Aorta (tissue), 5 donors: ENCODE measurements at regions of chr4 and their contacts with region 1.

Region 1: DNA sequence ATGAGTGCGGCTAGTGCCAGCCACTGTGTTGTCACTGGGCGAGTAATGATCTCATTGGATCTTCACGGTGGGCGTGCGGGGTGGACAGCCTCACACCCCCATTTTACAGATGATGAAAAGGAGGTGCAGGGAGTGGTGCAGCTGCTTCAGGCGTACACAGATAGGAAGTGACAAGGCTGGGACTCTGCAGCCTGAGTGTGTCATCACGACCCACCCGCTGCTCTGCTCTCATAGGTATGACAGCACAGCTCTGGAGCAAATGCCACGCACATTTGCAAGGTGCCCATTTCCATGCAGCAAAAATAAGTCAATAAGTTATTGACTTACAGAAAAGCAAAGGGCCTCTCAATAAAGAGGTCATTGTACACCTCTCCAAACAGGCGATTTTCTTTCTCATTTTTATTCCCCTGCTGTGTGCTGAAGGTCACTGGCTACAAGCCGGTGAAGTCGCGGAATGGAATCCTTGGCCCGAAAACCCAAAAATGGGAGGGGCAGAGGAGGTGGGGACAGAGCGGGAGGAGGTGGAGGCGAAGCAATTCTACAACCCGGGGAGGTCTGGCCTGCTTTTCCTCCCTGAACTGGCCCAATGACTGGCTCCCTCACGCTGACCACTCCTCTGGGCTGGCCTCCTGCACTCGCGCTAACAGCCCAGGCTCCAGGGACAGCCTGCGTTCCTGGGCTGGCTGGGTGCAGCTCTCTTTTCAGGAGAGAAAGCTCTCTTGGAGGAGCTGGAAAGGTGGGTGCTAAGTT is at the start of gene SOD3:
- DNase-seq: peak; percentile 94
- ATAC-seq: peak; percentile 95
- H3K4me3 ChIP-seq: peak within 1 kb of the TSS; percentile 13 to 70
- H3K27ac ChIP-seq: peak within 1 kb of the TSS; percentile 98
- H3K4me1 ChIP-seq: peaks cover 0 to 3% of the 10 kb centered on the region in 2 donors
- H3K27me3 ChIP-seq: no peaks in the 10 kb centered on the region
- total RNA-seq, gene SOD3: 356 to 380 TPM

Region 2: DNA sequence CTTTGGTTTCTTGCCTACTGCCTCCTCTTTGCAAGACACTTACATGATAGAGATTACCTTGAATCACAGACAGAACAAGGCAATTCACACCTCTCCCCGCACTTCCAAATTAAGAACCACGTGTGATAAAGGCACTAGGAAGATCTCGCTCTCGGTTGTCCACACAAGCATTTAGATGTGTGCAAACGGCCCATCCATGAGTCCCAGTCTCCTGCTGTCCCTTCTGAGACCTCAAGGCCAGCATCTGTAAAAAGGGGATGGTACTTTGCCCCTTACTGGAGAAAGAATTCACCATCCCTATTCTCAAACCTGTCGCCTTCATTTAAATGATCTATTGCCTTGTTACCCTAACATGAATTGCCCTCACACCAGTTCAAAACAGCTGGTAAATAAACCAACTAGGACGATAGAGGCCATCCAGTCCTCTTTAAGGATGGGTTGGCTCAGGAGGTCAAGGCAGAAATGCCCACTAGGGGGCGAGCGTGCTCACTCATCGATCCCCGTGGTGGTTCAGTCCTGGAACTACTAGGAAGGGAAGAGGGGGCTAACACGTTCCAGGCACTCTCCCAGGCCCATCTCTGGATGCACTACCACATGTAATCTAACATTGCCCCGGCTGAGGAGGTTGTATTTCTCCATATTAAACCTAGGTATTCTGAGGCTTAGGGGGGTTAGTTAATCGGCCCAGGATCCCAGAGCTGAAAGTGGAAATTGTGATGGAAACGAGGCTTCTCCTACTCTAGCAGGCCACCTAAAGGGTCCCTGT is 306.5 kb before region 1 on chr4:
- intact Hi-C with region 1: loop called in 1 of 2 experiments (anchors 10 kb)
- DNase-seq: peak; percentile 78 to 92
- ATAC-seq: peak; percentile 77
- H3K4me3 ChIP-seq: no peak overlapping the region
- H3K27ac ChIP-seq: no peak overlapping the region
- H3K4me1 ChIP-seq: no peaks in the 10 kb centered on the region
- H3K27me3 ChIP-seq: no peaks in the 10 kb centered on the region

Region 3: DNA sequence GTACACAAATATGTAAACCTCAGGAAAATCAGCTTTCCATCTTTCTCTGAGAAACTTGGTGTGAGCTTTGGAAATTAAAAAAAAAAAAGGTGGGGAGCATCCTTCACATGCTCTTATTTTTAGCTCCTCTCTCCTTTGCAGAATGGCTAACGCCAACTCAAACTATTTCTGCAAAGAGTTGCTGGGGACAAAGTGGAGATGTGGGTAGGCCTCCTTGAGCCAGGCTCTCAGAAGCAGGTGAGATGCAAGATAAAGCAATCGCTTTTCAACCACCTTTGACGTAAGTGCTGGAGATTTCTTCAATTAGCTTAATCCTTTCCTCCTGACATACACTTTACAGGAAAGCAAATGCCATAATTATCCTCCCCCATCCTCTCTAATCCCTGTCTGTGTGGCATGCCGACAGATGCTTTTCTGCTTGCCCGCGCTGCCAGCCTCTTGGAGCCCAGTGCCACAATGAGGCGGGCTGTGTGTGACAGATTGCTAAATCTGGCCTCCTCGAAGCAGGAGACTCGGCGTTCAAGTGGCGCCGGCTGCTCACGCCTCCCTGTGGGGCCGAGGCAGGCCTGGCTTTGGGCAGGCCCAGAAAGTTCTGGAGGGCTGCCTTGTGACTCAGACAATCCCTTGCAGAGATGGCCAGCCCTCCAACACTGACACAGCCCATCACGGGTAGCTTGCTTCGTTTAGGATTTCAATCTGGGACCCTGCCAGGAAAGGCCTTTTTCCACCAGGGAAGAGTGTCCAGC is 64.7 kb before region 1 on chr4:
- intact Hi-C with region 1: loop called (anchors 5 kb)
- DNase-seq: peak; percentile 93 to 94
- ATAC-seq: peak; percentile 92
- H3K4me3 ChIP-seq: no peak overlapping the region
- H3K27ac ChIP-seq: peak overlapping the region; percentile 31 to 73
- H3K4me1 ChIP-seq: peaks cover 5% of the 10 kb centered on the region in 2 donors
- H3K27me3 ChIP-seq: no peaks in the 10 kb centered on the region

Region 4: DNA sequence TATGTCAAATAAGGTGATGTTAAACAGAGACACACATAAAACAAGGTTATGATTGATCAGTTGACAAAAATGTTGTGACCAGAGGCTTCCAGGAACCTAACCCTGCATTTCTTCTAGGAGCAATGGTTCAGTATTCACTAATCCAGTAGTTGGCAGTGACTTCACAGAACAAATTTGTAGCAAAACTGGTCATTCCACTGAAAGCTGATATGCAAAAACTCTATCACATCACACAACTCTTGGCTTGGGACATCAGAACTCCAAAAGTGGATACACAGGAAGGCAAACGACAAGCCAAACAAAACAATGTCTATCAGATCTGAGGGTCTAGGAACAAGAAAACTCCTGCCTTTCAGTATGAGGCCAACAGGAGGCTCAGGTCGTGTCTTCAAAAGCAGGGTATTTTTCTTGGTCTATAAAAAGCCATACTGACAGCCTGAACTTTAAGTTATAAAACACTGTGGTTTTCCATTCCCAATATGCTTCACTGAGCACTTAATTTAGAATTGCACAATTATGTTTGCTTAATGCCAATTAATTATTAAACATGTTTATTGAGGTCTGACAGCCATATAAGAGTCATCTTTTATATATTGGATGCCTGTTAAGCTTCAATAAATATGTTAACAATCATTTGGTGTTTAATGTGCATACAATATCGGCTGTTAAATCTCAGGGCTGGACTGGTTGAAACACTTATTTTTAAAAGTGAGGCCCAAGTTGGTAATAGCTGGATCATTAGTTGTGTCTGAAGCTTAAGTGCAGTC is 45.9 kb after region 1 on chr4:
- intact Hi-C with region 1: loop called in 1 of 2 experiments (anchors 5 kb)
- DNase-seq: no peak
- ATAC-seq: no peak
- H3K4me3 ChIP-seq: no peak overlapping the region
- H3K27ac ChIP-seq: peak overlapping the region; percentile 71 to 84
- H3K4me1 ChIP-seq: peaks cover 0 to 7% of the 10 kb centered on the region in 2 donors
- H3K27me3 ChIP-seq: no peaks in the 10 kb centered on the region

Region 5: GRCh38 chr4:24856586-24856985 is 61.5 kb after region 1 on chr4:
- intact Hi-C with region 1: loop called (anchors 2 to 5 kb)
- DNase-seq: peak; percentile 76 to 85
- ATAC-seq: peak; percentile 62
- H3K4me3 ChIP-seq: no peak overlapping the region
- H3K27ac ChIP-seq: peak overlapping the region; percentile 64 to 70
- H3K4me1 ChIP-seq: peaks cover 5 to 22% of the 10 kb centered on the region in 2 donors
- H3K27me3 ChIP-seq: no peaks in the 10 kb centered on the region

Region 6: DNA sequence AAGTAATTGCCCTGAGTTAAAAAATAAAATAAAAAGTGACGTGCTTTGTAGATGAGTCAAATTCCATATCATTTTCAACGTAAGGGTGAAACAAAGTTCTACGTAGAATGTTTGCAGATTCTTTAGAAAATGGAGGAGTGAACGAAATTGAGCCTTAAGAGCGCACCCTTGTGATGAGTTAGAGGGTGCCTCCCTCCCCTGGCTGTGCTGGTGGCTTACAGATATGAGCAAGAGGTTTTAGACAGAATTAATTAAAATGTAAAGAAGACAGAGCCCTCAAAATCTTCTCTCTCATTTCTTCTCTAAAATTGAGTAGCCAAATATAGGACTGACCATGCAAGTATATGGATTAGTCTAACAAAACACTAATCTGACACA is 265.9 kb after region 1 on chr4:
- intact Hi-C with region 1: no loop called
- DNase-seq: no peak
- ATAC-seq: peak; percentile 42
- H3K4me3 ChIP-seq: no peak overlapping the region
- H3K27ac ChIP-seq: peak overlapping the region in 1 of 2 donors; percentile 57
- H3K4me1 ChIP-seq: no peaks in the 10 kb centered on the region
- H3K27me3 ChIP-seq: no peaks in the 10 kb centered on the region

Region 7: DNA sequence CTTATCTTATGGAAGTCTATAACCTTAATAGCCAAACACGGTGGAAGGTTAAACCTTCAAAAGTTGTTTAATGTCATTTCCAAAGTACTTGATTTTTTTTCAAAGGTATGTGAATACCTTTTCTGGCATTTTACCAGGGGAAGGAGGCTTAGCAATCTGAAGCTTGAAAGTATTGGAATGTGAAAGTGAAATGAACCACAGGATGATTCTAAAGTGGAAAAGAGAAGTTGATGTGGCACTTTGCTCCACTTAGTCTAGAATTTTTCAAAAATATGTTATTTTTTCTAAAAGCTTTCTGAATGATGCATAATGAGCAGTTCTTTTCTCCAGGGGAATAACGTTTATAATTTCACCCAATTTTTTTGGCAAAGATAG is 458.0 kb after region 1 on chr4:
- intact Hi-C with region 1: no loop called
- DNase-seq: no peak
- ATAC-seq: no peak
- H3K4me3 ChIP-seq: no peak overlapping the region
- H3K27ac ChIP-seq: no peak overlapping the region
- H3K4me1 ChIP-seq: no peaks in the 10 kb centered on the region
- H3K27me3 ChIP-seq: no peaks in the 10 kb centered on the region